ENCODE measurements at regions of chr2 and their contacts with region 1.

Region 1: DNA sequence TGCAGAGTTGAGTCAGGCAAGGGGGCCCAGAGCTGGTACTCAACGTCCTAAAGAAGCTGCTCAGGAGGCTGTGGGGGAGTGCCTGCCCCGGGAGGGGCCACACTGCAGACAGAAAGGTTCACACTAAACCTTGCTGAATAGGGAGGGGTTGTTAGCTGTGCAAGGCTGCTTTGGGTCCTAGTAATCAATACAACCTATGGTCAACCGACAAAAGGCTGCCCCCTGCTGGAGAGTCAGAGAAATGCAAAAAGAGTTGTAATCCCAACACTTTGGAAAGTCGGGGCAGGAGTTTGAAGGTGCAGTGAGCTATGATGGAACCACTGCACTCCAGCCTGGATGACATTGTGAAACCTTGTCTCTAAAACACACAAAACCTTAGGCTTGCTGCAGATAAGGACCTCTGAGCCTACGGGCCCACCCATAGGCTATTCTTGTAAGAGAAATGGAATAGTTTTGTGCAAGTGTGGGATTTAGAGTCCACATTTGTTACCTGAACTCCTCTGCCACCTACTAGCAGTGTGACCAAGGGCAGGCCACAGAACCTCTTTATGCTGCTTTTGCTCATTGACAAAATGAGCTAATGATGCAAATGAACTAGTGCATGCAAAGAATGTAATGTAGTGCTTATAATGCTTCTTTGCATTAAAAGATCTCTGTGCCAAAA is 81.5 kb downstream of the PRPF40A start:
- DNase-seq: peak; percentile 75
- H3K4me3 ChIP-seq: no peak overlapping the region
- H3K27ac ChIP-seq: no peak overlapping the region
- H3K4me1 ChIP-seq: peaks cover 3 to 13% (median 9%) of the 10 kb centered on the region in 6 donors
- H3K27me3 ChIP-seq: no peaks in the 10 kb centered on the region
- CTCF ChIP-seq: peak; percentile 65 to 90 (median 81)
- POLR2A ChIP-seq: no peak

Region 2: DNA sequence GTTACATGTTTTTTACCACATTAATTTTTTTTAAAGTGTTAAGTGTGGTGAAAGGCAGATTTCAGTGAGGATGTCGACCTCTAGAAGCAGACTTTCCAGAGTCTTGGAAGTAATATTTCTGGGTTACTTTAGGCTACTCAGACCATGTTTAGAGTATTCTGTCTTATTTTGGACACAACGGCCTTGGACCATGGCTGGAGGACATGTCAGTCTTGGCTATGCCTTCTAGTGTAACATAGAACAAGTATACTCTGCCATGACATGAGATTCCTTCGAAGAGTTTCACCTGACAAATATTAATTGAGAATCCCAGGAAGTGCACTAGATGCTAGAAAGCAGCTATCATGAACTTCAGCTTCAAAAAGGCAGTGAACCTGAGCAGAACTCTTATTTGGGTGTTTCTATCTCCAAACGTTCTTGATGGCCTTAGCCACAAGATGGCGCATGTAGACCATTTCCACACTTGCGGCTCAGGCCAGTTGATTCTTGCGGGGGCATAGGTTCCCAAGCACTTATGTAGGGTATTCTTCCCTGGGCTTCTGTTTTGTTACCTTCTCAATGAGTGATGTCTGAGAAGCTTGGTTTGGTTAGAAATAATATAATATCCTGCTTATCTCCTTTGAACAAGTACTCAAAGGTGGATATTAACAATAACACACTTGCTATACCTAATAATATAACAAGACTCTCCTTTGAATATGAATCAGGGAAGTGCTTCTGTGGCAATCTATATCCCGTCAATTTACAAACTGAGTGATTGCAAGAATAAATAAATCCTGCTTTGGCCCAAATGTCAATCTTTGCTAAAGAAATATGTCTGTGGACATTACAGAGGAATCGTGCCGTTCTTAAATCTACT is 598.9 kb before region 1 on chr2:
- intact Hi-C with region 1: loop called (anchors 10 kb)
- DNase-seq: no peak
- H3K4me3 ChIP-seq: no peak overlapping the region
- H3K27ac ChIP-seq: no peak overlapping the region
- H3K4me1 ChIP-seq: peaks cover 3 to 26% (median 14%) of the 10 kb centered on the region in 6 donors
- H3K27me3 ChIP-seq: no peaks in the 10 kb centered on the region
- CTCF ChIP-seq: peak in 10 of 11 experiments; percentile 30 to 79 (median 67)
- POLR2A ChIP-seq: no peak

Region 3: GRCh38 chr2:152175458-152176325 is 460.1 kb before region 1 on chr2 and contains the start of gene STAM2:
- intact Hi-C with region 1: loop called (anchors 5 kb)
- DNase-seq: peak; percentile 98
- H3K4me3 ChIP-seq: peak within 1 kb of the TSS; percentile 67 to 91 (median 81)
- H3K27ac ChIP-seq: peak within 1 kb of the TSS; percentile 94 to 98 (median 97)
- H3K4me1 ChIP-seq: peaks cover 12 to 53% (median 46%) of the 10 kb centered on the region in 6 donors
- H3K27me3 ChIP-seq: no peaks in the 10 kb centered on the region
- CTCF ChIP-seq: peak; percentile 97 to 100 (median 99)
- POLR2A ChIP-seq: peak in 1 of 3 donors; percentile 56
- total RNA-seq, gene STAM2: 25.4 to 41.2 (median 33.2) TPM

Region 4: GRCh38 chr2:152585830-152586484 is 49.8 kb before region 1 on chr2:
- intact Hi-C with region 1: no loop called
- DNase-seq: no peak
- H3K4me3 ChIP-seq: no peak overlapping the region
- H3K27ac ChIP-seq: peak overlapping the region in 5 of 8 donors; percentile 3 to 39 (median 26)
- H3K4me1 ChIP-seq: peaks cover 0 to 16% (median 0%) of the 10 kb centered on the region in 6 donors
- H3K27me3 ChIP-seq: no peaks in the 10 kb centered on the region
- CTCF ChIP-seq: no peak
- POLR2A ChIP-seq: no peak

Measured in spleen (tissue), 13 donors.